Heart left ventricle (tissue), 16 donors: ENCODE measurements at regions of chr20 and their contacts with region 1.

Region 1: GRCh38 chr20:45771182-45771759 is 20.4 kb downstream of the WFDC3 start:
- DNase-seq: peak; percentile 59 to 81 (median 74)
- ATAC-seq: peak; percentile 48 to 86 (median 84)
- H3K4me3 ChIP-seq: no peak overlapping the region
- H3K27ac ChIP-seq: peak overlapping the region in 6 of 12 donors; percentile 11 to 77 (median 32)
- H3K4me1 ChIP-seq: peaks cover 0 to 11% (median 5%) of the 10 kb centered on the region in 12 donors
- H3K27me3 ChIP-seq: peaks cover 0 to 3% (median 0%) of the 10 kb centered on the region in 9 donors
- CTCF ChIP-seq: peak; percentile 89 to 98 (median 92)
- POLR2A ChIP-seq: no peak

Region 2: GRCh38 chr20:45011108-45011526 is 760.2 kb before region 1 on chr20:
- intact Hi-C with region 1: loop called in 1 of 10 experiments (anchors 5 kb)
- DNase-seq: peak in 3 of 5 donors; percentile 33 to 50 (median 35)
- ATAC-seq: peak in 3 of 4 donors; percentile 71 to 83 (median 75)
- H3K4me3 ChIP-seq: no peak overlapping the region
- H3K27ac ChIP-seq: no peak overlapping the region
- H3K4me1 ChIP-seq: peaks cover 0 to 37% (median 14%) of the 10 kb centered on the region in 12 donors
- H3K27me3 ChIP-seq: no peaks in the 10 kb centered on the region
- CTCF ChIP-seq: peak; percentile 52 to 85 (median 70)
- POLR2A ChIP-seq: no peak

Region 3: GRCh38 chr20:45373353-45374100 is 397.7 kb before region 1 on chr20:
- intact Hi-C with region 1: loop called in 2 of 10 experiments (anchors 5 kb)
- DNase-seq: peak; percentile 91 to 94 (median 92)
- ATAC-seq: peak; percentile 85 to 92 (median 88)
- H3K4me3 ChIP-seq: peak overlapping the region; percentile 23 to 73 (median 62)
- H3K27ac ChIP-seq: peak overlapping the region in 11 of 12 donors; percentile 48 to 82 (median 73)
- H3K4me1 ChIP-seq: peaks cover 0 to 27% (median 11%) of the 10 kb centered on the region in 12 donors
- H3K27me3 ChIP-seq: no peaks in the 10 kb centered on the region
- CTCF ChIP-seq: peak; percentile 81 to 96 (median 90)
- POLR2A ChIP-seq: no peak

Region 4: GRCh38 chr20:45450097-45450818 is 321.0 kb before region 1 on chr20:
- intact Hi-C with region 1: loop called in 6 of 10 experiments (anchors 5 to 10 kb)
- DNase-seq: no peak
- ATAC-seq: peak; percentile 16 to 50 (median 42)
- H3K4me3 ChIP-seq: no peak overlapping the region
- H3K27ac ChIP-seq: peak overlapping the region in 4 of 12 donors; percentile 10 to 83 (median 43)
- H3K4me1 ChIP-seq: peaks cover 0 to 9% (median 0%) of the 10 kb centered on the region in 12 donors
- H3K27me3 ChIP-seq: no peaks in the 10 kb centered on the region
- CTCF ChIP-seq: peak; percentile 48 to 73 (median 62)
- POLR2A ChIP-seq: no peak

Region 5: GRCh38 chr20:45470262-45470931 is 300.9 kb before region 1 on chr20:
- intact Hi-C with region 1: loop called in 1 of 10 experiments (anchors 10 kb)
- DNase-seq: peak in 4 of 5 donors; percentile 31 to 67 (median 40)
- ATAC-seq: peak in 3 of 4 donors; percentile 71 to 88 (median 77)
- H3K4me3 ChIP-seq: peak overlapping the region; percentile 41 to 64 (median 53)
- H3K27ac ChIP-seq: peak overlapping the region in 2 of 12 donors; percentile 29 to 85
- H3K4me1 ChIP-seq: peaks cover 6 to 23% (median 16%) of the 10 kb centered on the region in 12 donors
- H3K27me3 ChIP-seq: peaks cover 7 to 77% (median 33%) of the 10 kb centered on the region in 9 donors
- CTCF ChIP-seq: no peak
- POLR2A ChIP-seq: no peak

Region 6: DNA sequence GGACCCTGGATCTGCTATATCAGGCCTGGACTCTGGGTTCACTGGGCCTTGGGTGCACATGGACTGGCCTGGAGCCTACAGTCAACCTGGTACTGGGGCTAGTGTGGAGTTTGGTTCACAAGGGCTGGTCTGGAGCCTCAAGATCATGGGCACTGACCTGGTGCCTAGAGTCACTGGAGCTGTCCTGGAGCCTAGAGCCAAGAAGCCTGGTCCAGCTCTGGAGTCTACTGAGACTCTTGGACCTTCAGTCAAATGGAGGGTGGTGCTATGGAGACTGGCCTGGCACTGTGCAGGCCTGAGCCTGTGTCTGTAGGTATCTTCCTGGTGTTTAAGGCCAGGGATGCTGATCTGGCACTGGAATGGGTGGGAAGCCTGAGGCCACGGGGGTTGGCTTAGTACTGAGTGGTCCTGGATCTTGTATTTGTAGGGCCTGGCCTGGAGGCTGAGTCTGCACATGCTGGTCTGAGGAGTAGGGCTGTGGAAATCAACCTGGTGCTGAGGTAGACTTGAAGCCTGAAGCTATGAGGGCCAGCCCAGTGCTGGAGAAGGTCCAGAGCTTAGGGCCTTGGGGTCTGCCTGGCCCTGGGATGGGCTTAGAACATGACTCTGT is 123.7 kb before region 1 on chr20:
- intact Hi-C with region 1: no loop called
- DNase-seq: no peak
- ATAC-seq: no peak
- H3K4me3 ChIP-seq: no peak overlapping the region
- H3K27ac ChIP-seq: no peak overlapping the region
- H3K4me1 ChIP-seq: no peaks in the 10 kb centered on the region
- H3K27me3 ChIP-seq: peaks cover 0 to 7% (median 0%) of the 10 kb centered on the region in 9 donors
- CTCF ChIP-seq: no peak
- POLR2A ChIP-seq: no peak